ENCODE measurements at regions of chr12 and their contacts with region 1.

Region 1: GRCh38 chr12:69309461-69309860 is 38.7 kb upstream of the LYZ start:
- DNase-seq: no peak
- H3K4me3 Mint-ChIP-seq: no peak overlapping the region
- H3K27ac Mint-ChIP-seq: no peak overlapping the region
- H3K4me1 Mint-ChIP-seq: no peaks in the 10 kb centered on the region
- H3K27me3 Mint-ChIP-seq: peaks cover 12% of the 10 kb centered on the region

Region 2: DNA sequence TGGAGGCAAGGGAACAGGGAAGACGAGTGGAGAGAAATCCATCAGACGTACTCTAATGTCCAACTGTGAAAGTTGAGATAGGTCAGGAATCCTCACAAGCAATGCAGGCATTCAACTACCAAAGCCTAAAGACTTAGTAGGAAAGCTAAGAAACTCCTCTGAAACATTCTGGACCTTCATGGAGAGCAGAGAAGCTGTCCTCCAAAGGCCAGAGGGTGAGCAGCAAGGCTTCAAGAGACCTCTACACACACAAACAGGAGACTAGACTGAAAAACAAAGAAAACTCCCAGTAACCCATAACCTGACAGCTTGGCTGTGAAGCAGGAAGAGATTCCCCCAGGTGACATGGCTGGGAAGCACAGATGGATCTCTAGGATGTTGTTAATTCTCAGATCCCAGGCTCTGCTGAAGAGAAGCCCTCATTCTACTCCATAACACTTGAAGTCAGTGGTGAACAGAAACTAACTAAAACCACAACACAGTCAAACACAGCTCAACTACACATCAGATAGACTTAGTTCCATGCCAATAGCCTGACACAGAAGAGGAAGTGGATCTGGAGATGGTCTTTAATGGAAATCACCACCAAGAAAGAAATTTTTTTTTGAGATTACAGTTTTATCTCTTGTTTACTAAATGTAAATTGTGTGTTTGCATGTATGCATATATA is 15.5 kb after region 1 on chr12:
- CTCF ChIA-PET with region 1: interaction called, 10 read pairs
- POLR2A ChIA-PET with region 1: no interaction called
- DNase-seq: no peak
- H3K4me3 Mint-ChIP-seq: no peak overlapping the region
- H3K27ac Mint-ChIP-seq: no peak overlapping the region
- H3K4me1 Mint-ChIP-seq: peaks cover 19% of the 10 kb centered on the region
- H3K27me3 Mint-ChIP-seq: peaks cover 8% of the 10 kb centered on the region

Region 3: GRCh38 chr12:69385038-69385437 is 75.6 kb after region 1 on chr12:
- CTCF ChIA-PET with region 1: no interaction called
- POLR2A ChIA-PET with region 1: no interaction called
- DNase-seq: no peak
- H3K4me3 Mint-ChIP-seq: no peak overlapping the region
- H3K27ac Mint-ChIP-seq: no peak overlapping the region
- H3K4me1 Mint-ChIP-seq: peaks cover 3% of the 10 kb centered on the region
- H3K27me3 Mint-ChIP-seq: no peaks in the 10 kb centered on the region

Measured in activated CD4-positive, alpha-beta T cell treated with anti-CD3 and anti-CD28 coated beads, Interleukin-2, amount 10 ng/mL, durations not matched to agents 7 days and 5 days (primary cell).